Prostate gland (tissue), 2 donors: ENCODE measurements at regions of chr20 and their contacts with region 1.

Region 1: GRCh38 chr20:44609511-44610312 is 27.3 kb downstream of the PKIG start:
- DNase-seq: peak; percentile 82
- H3K4me3 ChIP-seq: peak overlapping the region in 1 of 2 donors; percentile 3
- H3K27ac ChIP-seq: peak overlapping the region; percentile 70 to 75
- H3K4me1 ChIP-seq: peaks cover 6% of the 10 kb centered on the region
- H3K27me3 ChIP-seq: no peaks in the 10 kb centered on the region
- CTCF ChIP-seq: peak; percentile 96 to 97 (median 96)
- POLR2A ChIP-seq: no peak

Region 2: GRCh38 chr20:44210422-44211176 is 399.1 kb before region 1 on chr20 and contains the start of gene OSER1:
- intact Hi-C with region 1: loop called (anchors 10 kb)
- DNase-seq: peak; percentile 99
- H3K4me3 ChIP-seq: peak within 1 kb of the TSS; percentile 81 to 90
- H3K27ac ChIP-seq: peak within 1 kb of the TSS; percentile 97
- H3K4me1 ChIP-seq: no peaks in the 10 kb centered on the region
- H3K27me3 ChIP-seq: no peaks in the 10 kb centered on the region
- CTCF ChIP-seq: peak in 2 of 4 experiments; percentile 24 to 32
- POLR2A ChIP-seq: peak; percentile 93
- total RNA-seq, gene OSER1: 31.6 to 42.7 TPM

Region 3: GRCh38 chr20:44310664-44311639 is 298.8 kb before region 1 on chr20 and contains the start of gene FITM2:
- intact Hi-C with region 1: loop called (anchors 10 kb)
- DNase-seq: peak; percentile 97
- H3K4me3 ChIP-seq: peak within 1 kb of the TSS; percentile 68 to 92
- H3K27ac ChIP-seq: peak within 1 kb of the TSS; percentile 52 to 67
- H3K4me1 ChIP-seq: peaks cover 7% of the 10 kb centered on the region
- H3K27me3 ChIP-seq: no peaks in the 10 kb centered on the region
- CTCF ChIP-seq: peak; percentile 87 to 99 (median 98)
- POLR2A ChIP-seq: peak; percentile 48
- total RNA-seq, gene FITM2: 11.6 to 24.2 TPM

Region 4: GRCh38 chr20:44388466-44389023 is 221.2 kb before region 1 on chr20:
- intact Hi-C with region 1: loop called (anchors 5 kb)
- DNase-seq: peak; percentile 32
- H3K4me3 ChIP-seq: no peak overlapping the region
- H3K27ac ChIP-seq: no peak overlapping the region
- H3K4me1 ChIP-seq: no peaks in the 10 kb centered on the region
- H3K27me3 ChIP-seq: peaks cover 3% of the 10 kb centered on the region
- CTCF ChIP-seq: peak; percentile 55 to 80 (median 60)
- POLR2A ChIP-seq: no peak

Region 5: DNA sequence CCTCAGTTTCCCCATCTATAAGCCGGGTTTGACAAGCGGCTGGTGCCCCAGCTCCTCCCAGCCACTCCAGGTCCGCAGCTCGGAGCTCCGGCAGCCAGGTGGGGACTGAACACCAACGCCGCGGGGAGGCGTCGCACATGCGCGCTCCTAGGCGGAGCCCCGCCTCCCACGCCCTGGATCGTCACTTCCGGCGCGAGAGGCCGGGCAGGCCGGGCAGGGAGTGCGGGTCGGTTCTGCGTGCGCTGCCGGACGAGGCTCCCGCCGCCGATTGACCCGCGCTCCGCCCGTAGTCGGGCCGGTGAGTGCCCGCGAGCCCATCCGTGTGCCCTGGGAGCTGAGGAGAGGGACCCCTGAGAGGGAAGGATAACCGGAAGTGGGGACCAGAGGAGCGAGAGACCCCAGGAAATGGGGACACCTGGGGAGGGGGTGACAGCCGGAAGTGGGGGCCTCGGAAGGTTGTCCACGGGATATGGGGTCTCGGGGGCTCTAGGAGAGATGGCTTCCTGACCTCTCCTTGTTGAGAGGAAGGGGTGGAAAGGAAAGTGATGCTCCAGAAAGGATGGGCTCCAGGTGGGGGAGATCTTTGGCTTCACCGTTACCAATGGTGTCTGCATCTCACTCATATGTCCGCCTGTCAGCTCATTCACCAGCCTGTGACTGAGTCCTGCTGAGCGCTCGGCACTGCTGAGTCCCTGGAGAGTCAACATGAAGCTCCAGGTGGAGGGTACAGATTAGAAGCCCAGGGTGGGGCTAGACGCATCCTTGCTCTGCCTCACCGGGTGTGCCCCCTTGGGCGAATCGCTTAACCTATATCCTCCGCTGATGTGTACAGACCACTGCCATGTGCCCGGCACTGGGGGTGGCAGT is 133.8 kb before region 1 on chr20 and contains the start of gene TTPAL:
- intact Hi-C with region 1: loop called (anchors 5 kb)
- DNase-seq: peak; percentile 87
- H3K4me3 ChIP-seq: peak within 1 kb of the TSS; percentile 83 to 95
- H3K27ac ChIP-seq: peak within 1 kb of the TSS; percentile 90
- H3K4me1 ChIP-seq: no peaks in the 10 kb centered on the region
- H3K27me3 ChIP-seq: no peaks in the 10 kb centered on the region
- CTCF ChIP-seq: peak in 3 of 4 experiments; percentile 61 to 82 (median 78)
- POLR2A ChIP-seq: peak; percentile 97
- total RNA-seq, gene TTPAL: 11.8 to 14.8 TPM

Region 6: GRCh38 chr20:44532259-44532980 is 77.3 kb before region 1 on chr20:
- intact Hi-C with region 1: loop called (anchors 2 kb)
- DNase-seq: peak; percentile 21
- H3K4me3 ChIP-seq: peak overlapping the region; percentile 53 to 64
- H3K27ac ChIP-seq: peak overlapping the region; percentile 67 to 76
- H3K4me1 ChIP-seq: peaks cover 3% of the 10 kb centered on the region
- H3K27me3 ChIP-seq: no peaks in the 10 kb centered on the region
- CTCF ChIP-seq: no peak
- POLR2A ChIP-seq: no peak

Region 7: DNA sequence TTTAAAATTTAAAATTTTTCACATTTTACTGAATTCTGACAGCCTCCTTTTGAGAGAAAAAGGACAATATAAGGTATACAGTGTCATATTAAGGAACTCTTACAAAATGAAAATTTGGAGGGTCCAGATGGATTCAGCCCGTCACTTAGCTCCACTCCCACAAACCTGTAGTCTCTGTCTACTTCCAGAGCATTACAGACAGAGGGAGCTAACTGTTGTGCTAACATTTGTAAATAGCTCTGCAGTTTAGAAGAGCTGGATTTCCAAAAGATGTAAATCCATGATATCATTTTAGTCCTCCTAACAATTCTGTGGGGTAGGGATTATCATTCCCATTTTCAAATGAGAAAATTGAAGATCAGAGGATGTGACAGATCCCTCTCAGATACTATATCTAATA is 71.7 kb before region 1 on chr20:
- intact Hi-C with region 1: loop called (anchors 2 kb)
- DNase-seq: no peak
- H3K4me3 ChIP-seq: no peak overlapping the region
- H3K27ac ChIP-seq: no peak overlapping the region
- H3K4me1 ChIP-seq: no peaks in the 10 kb centered on the region
- H3K27me3 ChIP-seq: no peaks in the 10 kb centered on the region
- CTCF ChIP-seq: peak in 2 of 4 experiments; percentile 9 to 35
- POLR2A ChIP-seq: no peak

Region 8: DNA sequence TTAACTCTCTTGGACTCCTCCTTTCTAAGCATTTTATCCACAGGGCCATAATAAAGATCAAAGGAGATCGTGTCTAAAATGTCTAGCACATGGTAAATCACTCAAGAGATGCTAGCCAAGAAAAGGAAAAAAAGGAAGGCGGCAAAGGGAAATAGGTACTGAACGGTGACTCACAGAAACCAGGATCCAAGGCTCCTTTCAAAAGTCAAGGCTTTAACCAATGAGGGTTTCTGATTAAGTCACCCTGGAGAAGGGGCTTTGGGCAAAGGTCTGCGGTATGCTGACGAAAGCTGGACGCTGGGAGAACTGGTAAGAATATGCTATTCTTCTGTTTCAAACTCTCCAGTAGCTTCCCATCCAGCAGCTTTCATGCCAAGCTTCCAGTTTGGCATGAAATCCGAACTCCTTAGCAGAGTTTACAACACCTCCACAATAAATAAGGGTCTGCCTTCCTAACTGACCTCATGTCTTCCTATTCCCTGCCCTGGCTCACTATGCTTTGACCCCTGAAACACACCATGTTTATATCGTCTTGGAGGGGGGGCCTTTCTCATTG is 349.4 kb after region 1 on chr20:
- intact Hi-C with region 1: no loop called
- DNase-seq: no peak
- H3K4me3 ChIP-seq: peak overlapping the region; percentile 68 to 72
- H3K27ac ChIP-seq: peak overlapping the region; percentile 38 to 77
- H3K4me1 ChIP-seq: peaks cover 3% of the 10 kb centered on the region
- H3K27me3 ChIP-seq: no peaks in the 10 kb centered on the region
- CTCF ChIP-seq: no peak
- POLR2A ChIP-seq: no peak